B cell (primary cell): ENCODE measurements at regions of chr15 and their contacts with region 1.

Region 1: GRCh38 chr15:74906446-74907162 is at the start of gene FAM219B:
- DNase-seq: peak; percentile 86
- ATAC-seq: peak; percentile 90
- H3K4me3 ChIP-seq: peak within 1 kb of the TSS; percentile 73 to 89 (median 85)
- H3K4me3 Mint-ChIP-seq: peak within 1 kb of the TSS; percentile 98
- H3K27ac ChIP-seq: peak within 1 kb of the TSS; percentile 48 to 79
- H3K27ac Mint-ChIP-seq: peak within 1 kb of the TSS; percentile 98
- H3K4me1 ChIP-seq: peaks cover 19 to 23% of the 10 kb centered on the region in 2 donors
- H3K4me1 Mint-ChIP-seq: peaks cover 45% of the 10 kb centered on the region
- H3K27me3 ChIP-seq: no peaks in the 10 kb centered on the region
- H3K27me3 Mint-ChIP-seq: no peaks in the 10 kb centered on the region
- CTCF ChIP-seq: no peak
- total RNA-seq, gene FAM219B: 109 and 135 TPM in 2 replicates

Region 2: GRCh38 chr15:74505837-74506514 is 400.6 kb before region 1 on chr15:
- CTCF ChIA-PET with region 1: no interaction called
- POLR2A ChIA-PET with region 1: no interaction called
- intact Hi-C with region 1: no loop called
- DNase-seq: no peak
- ATAC-seq: no peak
- H3K4me3 ChIP-seq: no peak overlapping the region
- H3K4me3 Mint-ChIP-seq: no peak overlapping the region
- H3K27ac ChIP-seq: no peak overlapping the region
- H3K27ac Mint-ChIP-seq: no peak overlapping the region
- H3K4me1 ChIP-seq: no peaks in the 10 kb centered on the region
- H3K4me1 Mint-ChIP-seq: no peaks in the 10 kb centered on the region
- H3K27me3 ChIP-seq: no peaks in the 10 kb centered on the region
- H3K27me3 Mint-ChIP-seq: no peaks in the 10 kb centered on the region
- CTCF ChIP-seq: no peak

Region 3: DNA sequence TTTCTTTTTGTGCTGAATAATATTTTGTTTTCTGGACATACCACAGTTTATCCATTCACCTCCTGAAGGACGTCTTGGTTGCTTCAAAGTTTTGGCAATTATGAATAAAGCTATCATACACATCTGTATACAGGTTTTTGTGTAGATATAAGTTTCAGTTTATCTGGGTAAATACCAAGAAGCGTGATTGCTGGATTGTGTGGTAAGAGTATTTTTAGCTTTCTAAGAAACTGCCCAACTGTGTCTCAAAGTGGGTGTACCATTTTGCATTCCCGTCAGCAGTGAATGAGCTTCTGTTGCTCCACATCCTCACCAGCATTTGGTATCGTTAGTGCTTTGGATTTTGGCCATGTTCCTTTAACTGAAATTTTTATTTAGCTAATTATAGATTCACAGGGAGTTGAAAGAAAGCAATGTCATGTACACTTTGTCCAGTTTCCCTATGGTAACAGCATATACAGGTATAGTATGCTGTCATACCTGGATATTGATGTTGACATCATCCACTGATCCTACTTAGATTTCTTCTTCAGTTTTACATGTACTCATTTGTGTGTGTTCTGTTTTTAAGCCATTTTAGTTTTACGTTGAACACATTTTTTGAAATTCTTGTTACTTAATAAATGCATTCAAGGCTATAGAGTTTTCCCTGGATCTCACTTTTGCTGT is 353.7 kb before region 1 on chr15:
- CTCF ChIA-PET with region 1: no interaction called
- POLR2A ChIA-PET with region 1: no interaction called
- intact Hi-C with region 1: no loop called
- DNase-seq: no peak
- ATAC-seq: no peak
- H3K4me3 ChIP-seq: no peak overlapping the region
- H3K4me3 Mint-ChIP-seq: no peak overlapping the region
- H3K27ac ChIP-seq: no peak overlapping the region
- H3K27ac Mint-ChIP-seq: no peak overlapping the region
- H3K4me1 ChIP-seq: peaks cover 0 to 3% of the 10 kb centered on the region in 2 donors
- H3K4me1 Mint-ChIP-seq: peaks cover 21% of the 10 kb centered on the region
- H3K27me3 ChIP-seq: no peaks in the 10 kb centered on the region
- H3K27me3 Mint-ChIP-seq: no peaks in the 10 kb centered on the region
- CTCF ChIP-seq: no peak

Region 4: DNA sequence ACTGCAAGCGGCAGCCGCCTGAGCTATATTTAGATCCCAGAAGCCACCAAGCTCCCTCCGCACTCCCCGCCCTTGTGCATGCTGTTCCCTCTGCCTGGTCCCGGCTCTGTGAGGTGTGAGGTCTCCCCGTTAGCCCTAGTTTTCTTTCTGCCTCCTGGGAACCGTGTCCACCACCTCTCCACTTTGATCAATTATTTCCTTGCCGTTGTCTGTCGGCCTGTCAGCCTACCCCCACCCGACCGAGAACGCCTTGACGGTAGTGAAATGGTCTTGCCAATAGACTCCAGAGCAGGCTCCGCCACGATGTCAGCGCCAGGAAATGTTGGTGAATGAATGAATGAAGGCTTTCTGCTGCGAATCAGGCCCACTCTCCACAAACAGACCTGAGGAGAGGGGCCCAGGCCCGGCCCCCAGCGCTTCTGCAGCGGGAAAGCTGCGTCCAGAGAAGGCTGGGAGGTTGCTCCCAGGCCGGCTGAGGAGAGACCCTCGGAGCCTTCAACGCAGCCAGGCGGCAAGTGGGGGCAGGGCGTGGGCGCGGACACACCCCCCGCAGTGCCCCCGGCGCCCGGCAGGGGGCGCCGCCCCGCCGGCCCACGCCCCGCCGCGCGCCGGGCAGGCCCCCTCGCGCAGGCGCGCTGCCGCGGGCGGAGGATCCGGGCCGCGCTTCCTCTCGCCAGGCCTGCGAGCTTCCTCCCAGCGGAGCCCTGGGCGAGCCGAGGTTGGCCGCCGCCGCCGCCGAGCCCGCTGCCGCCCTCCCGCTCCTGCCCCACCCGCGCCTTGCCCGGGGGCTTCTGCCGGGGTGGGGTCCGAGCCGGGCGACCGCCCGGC is 125.0 kb before region 1 on chr15 and contains the start of gene CSK:
- CTCF ChIA-PET with region 1: interaction called, 14 read pairs
- POLR2A ChIA-PET with region 1: interaction called, 3 read pairs
- intact Hi-C with region 1: no loop called
- DNase-seq: peak; percentile 91
- ATAC-seq: peak; percentile 53
- H3K4me3 ChIP-seq: peak within 1 kb of the TSS; percentile 86 to 99 (median 93)
- H3K4me3 Mint-ChIP-seq: peak within 1 kb of the TSS; percentile 93
- H3K27ac ChIP-seq: peak within 1 kb of the TSS; percentile 91 to 99
- H3K27ac Mint-ChIP-seq: peak within 1 kb of the TSS; percentile 98
- H3K4me1 ChIP-seq: peaks cover 67 to 84% of the 10 kb centered on the region in 2 donors
- H3K4me1 Mint-ChIP-seq: peaks cover 85% of the 10 kb centered on the region
- H3K27me3 ChIP-seq: no peaks in the 10 kb centered on the region
- H3K27me3 Mint-ChIP-seq: no peaks in the 10 kb centered on the region
- CTCF ChIP-seq: peak; percentile 59
- total RNA-seq, gene CSK: 325 and 343 TPM in 2 replicates

Region 5: GRCh38 chr15:74799856-74800547 is 106.6 kb before region 1 on chr15:
- CTCF ChIA-PET with region 1: interaction called, 14 read pairs
- POLR2A ChIA-PET with region 1: no interaction called
- intact Hi-C with region 1: no loop called
- DNase-seq: peak; percentile 94
- ATAC-seq: peak; percentile 90
- H3K4me3 ChIP-seq: no peak overlapping the region
- H3K4me3 Mint-ChIP-seq: peak overlapping the region; percentile 78
- H3K27ac ChIP-seq: peak overlapping the region; percentile 89 to 93
- H3K27ac Mint-ChIP-seq: peak overlapping the region; percentile 90
- H3K4me1 ChIP-seq: peaks cover 56 to 61% of the 10 kb centered on the region in 2 donors
- H3K4me1 Mint-ChIP-seq: peaks cover 52% of the 10 kb centered on the region
- H3K27me3 ChIP-seq: no peaks in the 10 kb centered on the region
- H3K27me3 Mint-ChIP-seq: no peaks in the 10 kb centered on the region
- CTCF ChIP-seq: peak; percentile 93

Region 6: GRCh38 chr15:74884428-74885223 is 22.0 kb before region 1 on chr15:
- CTCF ChIA-PET with region 1: interaction called, 12 read pairs
- POLR2A ChIA-PET with region 1: interaction called, 8 read pairs
- intact Hi-C with region 1: loop called (anchors 1 kb)
- DNase-seq: no peak
- ATAC-seq: no peak
- H3K4me3 ChIP-seq: no peak overlapping the region
- H3K4me3 Mint-ChIP-seq: peak overlapping the region; percentile 23
- H3K27ac ChIP-seq: no peak overlapping the region
- H3K27ac Mint-ChIP-seq: no peak overlapping the region
- H3K4me1 ChIP-seq: peaks cover 8 to 19% of the 10 kb centered on the region in 2 donors
- H3K4me1 Mint-ChIP-seq: peaks cover 11% of the 10 kb centered on the region
- H3K27me3 ChIP-seq: no peaks in the 10 kb centered on the region
- H3K27me3 Mint-ChIP-seq: no peaks in the 10 kb centered on the region
- CTCF ChIP-seq: no peak

Region 7: GRCh38 chr15:74950078-74951000 is 43.7 kb after region 1 on chr15:
- CTCF ChIA-PET with region 1: interaction called, 25 read pairs
- POLR2A ChIA-PET with region 1: no interaction called
- intact Hi-C with region 1: loop called (anchors 1 kb)
- DNase-seq: peak; percentile 86
- ATAC-seq: peak; percentile 95
- H3K4me3 ChIP-seq: no peak overlapping the region
- H3K4me3 Mint-ChIP-seq: no peak overlapping the region
- H3K27ac ChIP-seq: no peak overlapping the region
- H3K27ac Mint-ChIP-seq: no peak overlapping the region
- H3K4me1 ChIP-seq: peaks cover 6 to 8% of the 10 kb centered on the region in 2 donors
- H3K4me1 Mint-ChIP-seq: peaks cover 7% of the 10 kb centered on the region
- H3K27me3 ChIP-seq: peaks cover 0 to 22% (median 2%) of the 10 kb centered on the region in 4 experiments
- H3K27me3 Mint-ChIP-seq: peaks cover 7% of the 10 kb centered on the region
- CTCF ChIP-seq: peak; percentile 97